ENCODE measurements at regions of chr7 and their contacts with region 1.

Region 1: DNA sequence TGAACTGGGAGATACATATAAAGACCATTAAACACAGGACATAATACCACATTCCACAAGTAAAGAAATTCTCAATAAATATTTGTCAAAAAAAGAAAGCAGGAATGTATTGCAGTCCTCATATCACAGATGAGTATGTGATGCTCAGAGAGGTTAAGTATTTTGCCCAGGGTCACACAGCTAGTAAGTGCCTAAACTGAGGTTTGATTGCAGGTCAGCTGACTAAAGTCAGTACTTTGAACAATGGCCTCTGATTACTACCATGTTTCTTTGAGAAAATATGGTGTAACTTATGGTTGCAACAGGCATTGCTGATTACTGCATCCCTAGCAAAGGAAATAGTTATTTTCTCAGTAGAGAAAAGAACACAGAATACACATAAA is 267.1 kb downstream of the ELMO1 start:
- DNase-seq: no peak
- ATAC-seq: peak; percentile 6; the same call in 1 of the 2 replicates
- H3K4me3 ChIP-seq: no peak overlapping the region
- H3K27ac ChIP-seq: peak overlapping the region; percentile 53
- H3K4me1 ChIP-seq: peaks cover 15% of the 10 kb centered on the region
- H3K27me3 ChIP-seq: no peaks in the 10 kb centered on the region
- CTCF ChIP-seq: no peak

Region 2: GRCh38 chr7:36473454-36474282 is 707.9 kb before region 1 on chr7:
- CTCF ChIA-PET with region 1: interaction called, 6 read pairs
- POLR2A ChIA-PET with region 1: no interaction called
- in situ Hi-C with region 1: loop called (anchors 25 kb)
- intact Hi-C with region 1: loop called (anchors 5 kb)
- DNase-seq: no peak
- ATAC-seq: peak; percentile 86
- H3K4me3 ChIP-seq: no peak overlapping the region
- H3K27ac ChIP-seq: no peak overlapping the region
- H3K4me1 ChIP-seq: no peaks in the 10 kb centered on the region
- H3K27me3 ChIP-seq: no peaks in the 10 kb centered on the region
- CTCF ChIP-seq: peak; percentile 88

Region 3: GRCh38 chr7:36487756-36488336 is 693.7 kb before region 1 on chr7:
- CTCF ChIA-PET with region 1: interaction called, 21 read pairs
- POLR2A ChIA-PET with region 1: no interaction called
- in situ Hi-C with region 1: loop called (anchors 25 kb)
- intact Hi-C with region 1: loop called (anchors 1 kb)
- DNase-seq: peak; percentile 88
- ATAC-seq: peak; percentile 91
- H3K4me3 ChIP-seq: no peak overlapping the region
- H3K27ac ChIP-seq: peak overlapping the region; percentile 57; the same call in 1 of the 2 replicates
- H3K4me1 ChIP-seq: no peaks in the 10 kb centered on the region
- H3K27me3 ChIP-seq: no peaks in the 10 kb centered on the region
- CTCF ChIP-seq: peak; percentile 82; the same call in 1 of the 2 replicates

Region 4: GRCh38 chr7:36659172-36659516 is 522.4 kb before region 1 on chr7:
- CTCF ChIA-PET with region 1: interaction called, 6 read pairs
- POLR2A ChIA-PET with region 1: no interaction called
- in situ Hi-C with region 1: no loop called
- intact Hi-C with region 1: loop called (anchors 5 kb)
- DNase-seq: peak; percentile 98
- ATAC-seq: peak; percentile 95
- H3K4me3 ChIP-seq: peak overlapping the region; percentile 2 to 28; a peak in 3 of 4 replicates
- H3K27ac ChIP-seq: peak overlapping the region; percentile 99
- H3K4me1 ChIP-seq: peaks cover 34% of the 10 kb centered on the region
- H3K27me3 ChIP-seq: no peaks in the 10 kb centered on the region
- CTCF ChIP-seq: no peak

Region 5: DNA sequence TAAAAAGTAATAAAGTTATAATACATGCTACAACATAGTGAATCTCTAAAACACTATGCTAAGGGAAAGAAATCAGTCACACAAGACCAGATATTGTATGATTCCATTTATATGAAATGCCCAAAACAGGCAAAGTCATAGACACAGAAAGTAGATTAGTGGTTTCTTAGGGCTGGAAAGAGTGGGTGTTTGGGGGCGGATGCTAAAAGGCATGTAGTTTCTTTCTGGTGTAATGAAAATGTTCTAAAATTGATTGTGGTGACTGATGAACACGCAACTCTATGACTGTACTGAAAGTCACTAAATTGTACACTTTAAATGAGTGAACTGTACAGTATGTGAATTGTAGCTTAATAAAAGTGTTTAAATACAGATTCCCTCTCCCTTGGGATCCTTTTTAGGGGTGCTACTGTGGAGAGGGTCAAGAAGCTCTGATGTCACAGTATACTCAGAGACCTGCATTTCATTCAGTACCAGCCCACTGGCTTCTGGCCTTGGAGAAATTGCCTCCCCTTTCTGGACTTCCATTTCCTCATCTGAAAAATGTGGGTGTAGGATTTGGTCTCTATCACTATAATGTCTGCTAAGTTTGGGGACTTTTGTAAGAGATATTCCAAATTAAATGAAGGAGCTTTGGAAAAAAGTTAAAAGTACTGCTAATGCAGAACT is 503.6 kb before region 1 on chr7:
- CTCF ChIA-PET with region 1: no interaction called
- POLR2A ChIA-PET with region 1: interaction called, 13 read pairs
- in situ Hi-C with region 1: no loop called
- intact Hi-C with region 1: no loop called
- DNase-seq: no peak
- ATAC-seq: no peak
- H3K4me3 ChIP-seq: no peak overlapping the region
- H3K27ac ChIP-seq: no peak overlapping the region
- H3K4me1 ChIP-seq: no peaks in the 10 kb centered on the region
- H3K27me3 ChIP-seq: no peaks in the 10 kb centered on the region
- CTCF ChIP-seq: no peak

Region 6: DNA sequence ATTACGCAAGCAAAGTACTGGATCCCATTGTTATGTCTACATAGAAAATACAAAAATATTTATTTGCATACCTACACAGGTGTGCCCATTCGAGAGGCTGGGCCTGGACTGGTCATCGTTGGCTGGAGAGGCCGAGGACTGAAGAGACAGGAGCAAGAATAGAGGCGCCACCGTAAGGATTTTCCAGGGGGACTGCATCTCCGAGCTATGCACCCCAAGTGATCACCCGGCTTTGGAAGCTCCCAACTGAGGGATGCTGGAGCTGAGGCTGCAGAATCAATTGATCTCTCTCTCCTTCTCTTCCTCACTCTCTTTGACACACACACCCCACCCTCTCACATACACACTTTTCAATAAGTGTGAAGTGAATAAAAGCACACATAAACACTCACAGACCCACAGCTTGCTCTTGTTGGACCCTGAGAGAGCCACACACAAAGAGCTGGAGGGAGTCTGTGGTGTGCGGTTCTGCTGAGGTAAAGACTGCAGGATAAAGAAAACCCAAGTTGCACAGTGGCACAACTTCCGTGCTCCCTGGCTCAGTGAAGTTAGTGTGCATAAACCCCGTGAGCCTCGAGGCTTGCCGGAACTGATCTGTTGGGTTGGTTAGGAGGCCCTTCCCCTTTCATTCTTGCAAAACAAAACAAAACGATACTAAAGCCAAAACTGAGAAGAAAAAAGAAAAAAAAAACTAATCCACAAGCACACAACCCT is 457.4 kb before region 1 on chr7 and contains the start of gene AOAH:
- CTCF ChIA-PET with region 1: interaction called, 10 read pairs
- POLR2A ChIA-PET with region 1: no interaction called
- in situ Hi-C with region 1: no loop called
- intact Hi-C with region 1: no loop called
- DNase-seq: no peak
- ATAC-seq: no peak
- H3K4me3 ChIP-seq: no peak within 1 kb of the TSS
- H3K27ac ChIP-seq: no peak within 1 kb of the TSS
- H3K4me1 ChIP-seq: no peaks in the 10 kb centered on the region
- H3K27me3 ChIP-seq: no peaks in the 10 kb centered on the region
- CTCF ChIP-seq: no peak
- total RNA-seq, gene AOAH: 0.31 TPM

Region 7: DNA sequence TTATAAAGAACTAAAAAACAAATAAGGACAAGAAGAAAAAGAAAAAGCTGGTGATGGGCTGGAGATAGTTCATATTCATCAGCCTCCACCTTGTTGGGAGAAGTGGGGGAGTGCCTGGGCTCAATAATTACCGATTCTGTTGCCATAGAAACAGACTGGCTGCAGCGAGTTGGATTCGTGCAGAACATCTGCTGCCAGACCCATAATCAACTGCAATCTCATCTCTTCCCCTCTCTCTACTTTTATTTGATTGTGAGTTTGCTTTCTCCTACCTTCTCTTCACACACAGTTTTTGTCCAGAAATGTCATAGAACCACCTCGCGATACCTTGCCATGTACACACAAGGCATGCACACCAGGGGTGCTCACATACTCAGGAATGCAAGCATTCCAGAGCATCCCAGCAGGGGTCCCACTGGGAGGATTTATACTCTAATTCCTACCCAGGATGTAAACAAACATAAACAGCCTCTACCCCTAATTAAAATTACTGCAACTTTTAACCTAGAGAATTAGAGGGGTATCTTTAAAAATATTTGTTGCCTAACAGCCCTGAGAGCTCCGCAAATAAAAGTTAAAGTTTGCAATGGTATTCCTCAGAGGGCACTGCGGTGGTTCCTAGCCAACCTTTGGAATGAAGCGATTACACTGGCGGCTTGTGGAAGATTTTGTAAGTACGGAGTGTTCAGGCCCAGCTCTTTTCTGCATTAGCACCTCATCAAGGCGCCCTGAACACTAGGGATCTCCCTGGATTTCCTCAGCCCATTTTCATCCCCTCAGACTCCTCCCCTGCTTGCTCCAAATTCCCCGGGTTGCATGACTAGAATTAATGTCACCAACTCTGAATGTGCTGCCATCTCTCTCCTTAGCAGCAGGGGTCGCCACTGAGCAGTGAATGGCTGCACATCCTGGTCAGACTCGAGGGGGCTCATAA is 194.8 kb before region 1 on chr7:
- CTCF ChIA-PET with region 1: interaction called, 3 read pairs
- POLR2A ChIA-PET with region 1: no interaction called
- in situ Hi-C with region 1: no loop called
- intact Hi-C with region 1: loop called (anchors 5 kb)
- DNase-seq: peak; percentile 27
- ATAC-seq: peak; percentile 82
- H3K4me3 ChIP-seq: no peak overlapping the region
- H3K27ac ChIP-seq: peak overlapping the region; percentile 34; the same call in 1 of the 2 replicates
- H3K4me1 ChIP-seq: peaks cover 3% of the 10 kb centered on the region; the same call in 1 of the 2 replicates
- H3K27me3 ChIP-seq: no peaks in the 10 kb centered on the region
- CTCF ChIP-seq: peak; percentile 91

Measured in Panc1 (cell line).